ENCODE measurements at regions of chr3 and their contacts with region 1.

Region 1: GRCh38 chr3:65720989-65721737 is 317.6 kb downstream of the MAGI1 start:
- DNase-seq: no peak
- H3K4me3 Mint-ChIP-seq: no peak overlapping the region
- H3K27ac Mint-ChIP-seq: no peak overlapping the region
- H3K4me1 Mint-ChIP-seq: no peaks in the 10 kb centered on the region
- H3K27me3 Mint-ChIP-seq: no peaks in the 10 kb centered on the region
- CTCF ChIP-seq: no peak

Region 2: DNA sequence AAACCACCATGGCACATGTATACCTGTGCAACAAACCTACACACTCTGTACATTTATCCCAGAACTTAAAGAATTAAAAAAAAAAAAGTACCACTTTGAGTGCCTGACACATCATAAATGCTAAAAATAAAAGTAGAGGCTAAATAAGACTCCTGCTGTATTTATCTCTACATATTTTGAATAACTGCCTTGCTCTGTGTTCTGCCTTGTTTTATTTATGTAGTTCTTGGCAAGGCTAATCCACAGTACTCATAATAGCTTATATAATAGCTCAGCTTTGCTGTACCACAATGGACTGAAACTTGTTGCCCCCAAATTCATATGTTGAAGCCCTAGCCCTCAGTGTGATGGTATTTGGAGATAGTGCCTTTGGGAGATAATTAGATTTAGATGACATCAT is 938.0 kb before region 1 on chr3:
- CTCF ChIA-PET with region 1: no interaction called
- POLR2A ChIA-PET with region 1: no interaction called
- intact Hi-C with region 1: no loop called
- DNase-seq: no peak
- H3K4me3 Mint-ChIP-seq: no peak overlapping the region
- H3K27ac Mint-ChIP-seq: no peak overlapping the region
- H3K4me1 Mint-ChIP-seq: no peaks in the 10 kb centered on the region
- H3K27me3 Mint-ChIP-seq: no peaks in the 10 kb centered on the region
- CTCF ChIP-seq: no peak

Region 3: DNA sequence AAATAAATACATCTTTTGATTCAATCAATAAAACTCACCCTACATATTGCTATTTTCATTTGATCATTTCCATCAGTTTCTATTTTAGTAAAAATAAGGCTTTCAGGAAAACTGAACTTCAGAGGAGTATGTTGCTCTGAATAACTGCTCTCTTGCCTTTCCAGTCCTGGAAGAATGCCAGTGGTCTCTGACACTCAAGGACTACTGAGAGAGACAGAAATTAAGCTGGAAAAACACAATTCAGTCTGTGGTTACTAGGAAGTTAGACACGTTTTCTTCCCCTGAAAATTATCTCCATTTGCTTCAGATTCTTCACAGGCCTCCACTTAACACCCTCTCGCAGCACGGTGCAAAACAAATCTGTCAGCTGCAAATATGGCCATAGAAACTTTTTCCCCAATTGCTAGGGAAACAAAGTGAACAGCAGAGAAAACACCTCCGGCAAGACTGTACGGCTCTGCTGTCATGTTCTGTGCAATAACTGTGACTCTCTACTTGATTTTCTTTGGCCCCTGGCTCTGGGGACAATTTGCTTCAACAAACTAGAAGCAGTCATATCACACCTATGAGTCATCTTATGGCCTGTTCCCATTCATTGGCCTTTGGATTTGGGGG is 35.4 kb before region 1 on chr3:
- CTCF ChIA-PET with region 1: no interaction called
- POLR2A ChIA-PET with region 1: no interaction called
- intact Hi-C with region 1: loop called (anchors 1 kb)
- DNase-seq: no peak
- H3K4me3 Mint-ChIP-seq: no peak overlapping the region
- H3K27ac Mint-ChIP-seq: no peak overlapping the region
- H3K4me1 Mint-ChIP-seq: no peaks in the 10 kb centered on the region
- H3K27me3 Mint-ChIP-seq: no peaks in the 10 kb centered on the region
- CTCF ChIP-seq: no peak

Region 4: DNA sequence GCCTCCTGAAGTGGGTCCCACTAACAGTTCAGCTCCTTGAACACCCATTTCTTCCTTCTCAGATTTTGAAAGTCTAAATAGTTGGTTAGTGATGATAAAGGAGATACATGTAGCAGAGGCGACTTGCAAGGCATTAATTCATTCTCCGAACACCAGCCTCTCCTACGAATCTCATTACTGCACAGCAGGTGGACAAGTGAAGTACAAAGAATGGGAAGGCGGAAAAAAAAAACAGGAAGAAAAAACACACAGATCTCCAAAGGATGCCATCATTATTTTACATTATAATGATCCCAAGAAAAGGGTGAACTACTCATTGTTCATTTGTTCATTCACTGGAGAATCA is 41.0 kb after region 1 on chr3:
- CTCF ChIA-PET with region 1: no interaction called
- POLR2A ChIA-PET with region 1: no interaction called
- intact Hi-C with region 1: no loop called
- DNase-seq: no peak
- H3K4me3 Mint-ChIP-seq: no peak overlapping the region
- H3K27ac Mint-ChIP-seq: no peak overlapping the region
- H3K4me1 Mint-ChIP-seq: no peaks in the 10 kb centered on the region
- H3K27me3 Mint-ChIP-seq: no peaks in the 10 kb centered on the region
- CTCF ChIP-seq: no peak

Measured in MCF 10A (cell line).